ENCODE measurements at regions of chr17 and their contacts with region 1.

Region 1: GRCh38 chr17:1783834-1784611 is 22.2 kb downstream of the SERPINF1 start:
- DNase-seq: peak in 2 of 9 experiments; percentile 36 to 52
- ATAC-seq: peak; percentile 58
- H3K4me3 ChIP-seq: no peak overlapping the region
- H3K4me3 Mint-ChIP-seq: no peak overlapping the region
- H3K27ac ChIP-seq: no peak overlapping the region
- H3K27ac Mint-ChIP-seq: no peak overlapping the region
- H3K4me1 ChIP-seq: no peaks in the 10 kb centered on the region
- H3K4me1 Mint-ChIP-seq: peaks cover 4% of the 10 kb centered on the region
- H3K27me3 ChIP-seq: no peaks in the 10 kb centered on the region
- H3K27me3 Mint-ChIP-seq: no peaks in the 10 kb centered on the region
- CTCF ChIP-seq: no peak

Region 2: DNA sequence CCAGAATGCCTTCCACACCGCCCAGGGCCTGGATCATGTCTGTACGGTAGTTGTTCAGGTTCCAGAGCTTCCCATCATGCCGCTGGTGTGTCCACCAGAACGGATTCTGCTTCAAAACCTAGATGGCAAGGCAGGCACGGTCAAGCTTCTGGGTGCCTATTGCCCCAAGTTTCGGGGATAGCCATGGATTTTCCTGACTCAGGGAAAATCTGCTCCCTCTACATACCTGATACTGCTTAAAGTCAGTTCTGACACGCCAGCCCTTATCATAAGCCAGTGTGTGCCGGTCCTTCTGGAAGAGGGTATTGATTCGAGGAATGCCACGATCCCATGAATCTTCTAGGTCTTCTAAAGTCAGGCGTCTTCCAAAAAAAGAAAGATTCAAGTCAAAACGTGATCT is 123.0 kb before region 1 on chr17:
- CTCF ChIA-PET with region 1: interaction called, 5 read pairs
- POLR2A ChIA-PET with region 1: no interaction called
- intact Hi-C with region 1: loop called in 1 of 2 experiments (anchors 10 kb)
- DNase-seq: no peak
- ATAC-seq: no peak
- H3K4me3 ChIP-seq: no peak overlapping the region
- H3K4me3 Mint-ChIP-seq: no peak overlapping the region
- H3K27ac ChIP-seq: no peak overlapping the region
- H3K27ac Mint-ChIP-seq: no peak overlapping the region
- H3K4me1 ChIP-seq: no peaks in the 10 kb centered on the region
- H3K4me1 Mint-ChIP-seq: peaks cover 6% of the 10 kb centered on the region
- H3K27me3 ChIP-seq: no peaks in the 10 kb centered on the region
- H3K27me3 Mint-ChIP-seq: no peaks in the 10 kb centered on the region
- CTCF ChIP-seq: no peak

Region 3: GRCh38 chr17:1673041-1673785 is 110.8 kb before region 1 on chr17:
- CTCF ChIA-PET with region 1: interaction called, 11 read pairs
- POLR2A ChIA-PET with region 1: no interaction called
- intact Hi-C with region 1: loop called (anchors 2 to 10 kb)
- DNase-seq: peak in 4 of 9 experiments; percentile 15 to 43 (median 38)
- ATAC-seq: peak; percentile 42
- H3K4me3 ChIP-seq: no peak overlapping the region
- H3K4me3 Mint-ChIP-seq: no peak overlapping the region
- H3K27ac ChIP-seq: no peak overlapping the region
- H3K27ac Mint-ChIP-seq: no peak overlapping the region
- H3K4me1 ChIP-seq: no peaks in the 10 kb centered on the region
- H3K4me1 Mint-ChIP-seq: peaks cover 29% of the 10 kb centered on the region
- H3K27me3 ChIP-seq: no peaks in the 10 kb centered on the region
- H3K27me3 Mint-ChIP-seq: no peaks in the 10 kb centered on the region
- CTCF ChIP-seq: no peak

Region 4: GRCh38 chr17:1730328-1731193 is 53.5 kb before region 1 on chr17:
- CTCF ChIA-PET with region 1: interaction called, 144 read pairs
- POLR2A ChIA-PET with region 1: no interaction called
- intact Hi-C with region 1: no loop called
- DNase-seq: no peak
- ATAC-seq: no peak
- H3K4me3 ChIP-seq: no peak overlapping the region
- H3K4me3 Mint-ChIP-seq: no peak overlapping the region
- H3K27ac ChIP-seq: no peak overlapping the region
- H3K27ac Mint-ChIP-seq: no peak overlapping the region
- H3K4me1 ChIP-seq: peaks cover 18% of the 10 kb centered on the region
- H3K4me1 Mint-ChIP-seq: peaks cover 23% of the 10 kb centered on the region
- H3K27me3 ChIP-seq: no peaks in the 10 kb centered on the region
- H3K27me3 Mint-ChIP-seq: no peaks in the 10 kb centered on the region
- CTCF ChIP-seq: no peak

Region 5: DNA sequence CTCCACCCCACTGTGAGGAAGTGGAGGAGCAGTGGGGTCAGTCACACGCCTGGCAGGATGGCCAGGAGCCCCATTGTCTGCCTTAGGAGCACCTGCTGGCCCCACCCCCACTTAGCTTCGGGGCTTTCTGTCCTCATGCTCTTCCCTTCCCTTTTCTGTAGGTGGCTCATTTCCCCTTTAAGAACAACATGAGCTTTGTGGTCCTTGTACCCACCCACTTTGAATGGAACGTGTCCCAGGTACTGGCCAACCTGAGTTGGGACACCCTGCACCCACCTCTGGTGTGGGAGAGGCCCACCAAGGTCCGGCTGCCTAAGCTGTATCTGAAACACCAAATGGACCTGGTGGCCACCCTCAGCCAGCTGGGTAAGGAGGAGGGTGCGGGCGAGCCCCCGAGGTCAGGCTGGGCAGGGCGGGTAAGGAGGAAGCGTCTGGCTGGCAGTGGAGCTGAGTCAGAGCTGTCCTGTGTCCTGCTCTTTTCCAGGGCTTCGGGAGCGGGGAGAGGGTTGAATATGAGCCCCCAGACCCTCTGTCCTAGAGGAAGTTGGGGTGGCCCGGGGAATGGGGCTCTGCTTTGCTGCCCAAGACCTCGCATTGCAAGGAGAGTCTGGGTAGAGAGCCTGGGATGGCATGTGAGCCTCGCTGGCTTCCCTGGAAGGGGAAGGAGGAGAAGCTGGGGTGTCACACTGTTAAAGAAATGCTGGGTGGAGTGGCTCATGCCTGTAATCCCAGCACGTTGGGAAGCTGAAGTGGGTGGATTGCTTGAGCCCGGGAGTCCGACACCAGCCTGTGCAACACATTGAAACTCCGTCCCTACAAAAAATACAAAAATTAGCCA is 31.4 kb before region 1 on chr17:
- CTCF ChIA-PET with region 1: interaction called, 13 read pairs
- POLR2A ChIA-PET with region 1: interaction called, 3 read pairs
- intact Hi-C with region 1: no loop called
- DNase-seq: peak in 1 of 9 experiments; percentile 33
- ATAC-seq: no peak
- H3K4me3 ChIP-seq: no peak overlapping the region
- H3K4me3 Mint-ChIP-seq: no peak overlapping the region
- H3K27ac ChIP-seq: no peak overlapping the region
- H3K27ac Mint-ChIP-seq: no peak overlapping the region
- H3K4me1 ChIP-seq: peaks cover 10% of the 10 kb centered on the region
- H3K4me1 Mint-ChIP-seq: peaks cover 7% of the 10 kb centered on the region
- H3K27me3 ChIP-seq: no peaks in the 10 kb centered on the region
- H3K27me3 Mint-ChIP-seq: no peaks in the 10 kb centered on the region
- CTCF ChIP-seq: no peak

Region 6: GRCh38 chr17:1769822-1770477 is 14.1 kb before region 1 on chr17:
- CTCF ChIA-PET with region 1: interaction called, 16 read pairs
- POLR2A ChIA-PET with region 1: no interaction called
- intact Hi-C with region 1: no loop called
- DNase-seq: peak in 6 of 9 experiments; percentile 19 to 68 (median 30)
- ATAC-seq: peak; percentile 58
- H3K4me3 ChIP-seq: peak overlapping the region in 1 of 2 experiments; percentile 10
- H3K4me3 Mint-ChIP-seq: peak overlapping the region; percentile 84
- H3K27ac ChIP-seq: peak overlapping the region; percentile 12 to 39
- H3K27ac Mint-ChIP-seq: peak overlapping the region; percentile 94
- H3K4me1 ChIP-seq: peaks cover 29% of the 10 kb centered on the region
- H3K4me1 Mint-ChIP-seq: peaks cover 38% of the 10 kb centered on the region
- H3K27me3 ChIP-seq: no peaks in the 10 kb centered on the region
- H3K27me3 Mint-ChIP-seq: no peaks in the 10 kb centered on the region
- CTCF ChIP-seq: no peak

Region 7: DNA sequence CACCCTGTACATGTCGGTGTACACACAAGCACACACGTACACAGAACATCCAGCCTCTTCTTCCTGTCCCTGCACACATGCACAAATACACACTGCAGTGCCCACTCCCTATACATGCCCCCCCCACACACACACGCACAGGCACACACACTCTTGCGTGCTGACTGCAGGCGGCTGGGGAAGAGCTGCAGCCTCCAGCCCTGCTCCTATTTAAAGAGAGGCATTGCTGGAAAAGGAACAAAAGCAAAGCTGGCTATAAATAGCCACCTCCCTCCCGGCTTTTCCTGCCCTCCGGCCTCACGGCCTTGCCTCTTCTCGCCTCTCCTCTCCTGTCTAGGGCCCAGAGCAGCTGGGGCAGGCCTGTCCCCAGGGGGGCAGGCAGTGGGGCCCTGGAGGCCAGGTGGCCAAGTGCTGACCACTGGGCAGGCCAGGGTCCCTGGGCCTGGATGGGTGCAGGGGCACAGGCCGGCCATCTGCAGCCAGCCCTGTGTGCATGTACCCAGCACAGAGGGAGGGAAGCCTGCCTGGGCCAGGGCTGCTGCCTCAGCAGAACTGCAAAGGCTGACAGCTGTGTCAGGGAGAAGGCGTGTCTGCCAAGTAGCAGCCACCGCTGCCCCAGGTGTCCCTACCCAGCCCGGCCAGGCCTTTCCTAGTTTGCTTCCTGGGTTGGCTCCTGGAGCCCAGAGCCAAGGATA is 215.7 kb after region 1 on chr17:
- CTCF ChIA-PET with region 1: no interaction called
- POLR2A ChIA-PET with region 1: no interaction called
- intact Hi-C with region 1: no loop called
- DNase-seq: no peak
- ATAC-seq: no peak
- H3K4me3 ChIP-seq: no peak overlapping the region
- H3K4me3 Mint-ChIP-seq: peak overlapping the region; percentile 35
- H3K27ac ChIP-seq: no peak overlapping the region
- H3K27ac Mint-ChIP-seq: no peak overlapping the region
- H3K4me1 ChIP-seq: no peaks in the 10 kb centered on the region
- H3K4me1 Mint-ChIP-seq: peaks cover 4% of the 10 kb centered on the region
- H3K27me3 ChIP-seq: peaks cover 3 to 16% of the 10 kb centered on the region in 2 experiments
- H3K27me3 Mint-ChIP-seq: peaks cover 24% of the 10 kb centered on the region
- CTCF ChIP-seq: no peak

Measured in CD8-positive, alpha-beta T cell (primary cell).